WTC11 (cell line): ENCODE measurements at regions of chr12 and their contacts with region 1.

Region 1: DNA sequence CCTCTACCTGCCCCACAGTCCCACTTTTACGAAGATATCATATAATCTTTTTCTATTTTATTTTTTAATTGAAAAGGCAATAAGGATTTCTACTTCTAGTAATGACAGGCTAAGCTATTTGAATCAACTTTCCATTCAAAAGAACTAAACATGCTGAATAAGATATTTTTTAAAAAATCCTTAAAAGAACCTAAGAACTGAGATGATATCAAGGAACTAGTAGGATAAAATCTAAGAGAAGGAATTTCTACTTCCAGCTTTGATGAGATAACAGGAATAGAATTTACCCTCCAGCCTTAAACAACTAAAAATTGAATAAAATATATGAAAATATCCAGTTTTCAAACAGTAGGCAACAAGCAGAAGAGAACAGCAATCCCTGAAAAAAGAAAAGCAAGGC is 69.0 kb downstream of the TMEM116 start:
- DNase-seq: no peak
- ATAC-seq: no peak
- H3K4me3 Mint-ChIP-seq: no peak overlapping the region
- H3K27ac Mint-ChIP-seq: no peak overlapping the region
- H3K4me1 Mint-ChIP-seq: peaks cover 5% of the 10 kb centered on the region
- H3K27me3 Mint-ChIP-seq: no peaks in the 10 kb centered on the region
- CTCF ChIP-seq: no peak

Region 2: DNA sequence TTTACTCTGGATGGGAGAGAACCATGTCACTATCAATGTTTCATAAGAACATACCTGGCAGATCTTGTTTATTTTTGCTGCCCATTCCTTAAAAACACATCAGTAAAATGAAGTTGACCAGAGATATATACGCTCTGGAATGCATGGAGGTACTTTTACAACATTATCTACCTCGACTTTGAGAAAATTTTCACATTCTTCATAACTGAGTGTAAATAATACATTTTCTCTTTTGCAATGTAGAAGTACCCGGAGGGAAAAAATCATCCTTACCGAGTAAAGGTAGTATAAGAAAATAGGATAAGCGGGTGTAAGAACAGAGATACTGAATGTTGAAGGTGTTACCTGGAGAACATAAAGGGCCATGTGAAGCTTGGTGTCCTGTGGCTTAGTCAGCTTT is 11.7 kb before region 1 on chr12:
- CTCF ChIA-PET with region 1: no interaction called
- POLR2A ChIA-PET with region 1: no interaction called
- DNase-seq: no peak
- ATAC-seq: no peak
- H3K4me3 Mint-ChIP-seq: no peak overlapping the region
- H3K27ac Mint-ChIP-seq: no peak overlapping the region
- H3K4me1 Mint-ChIP-seq: peaks cover 11% of the 10 kb centered on the region
- H3K27me3 Mint-ChIP-seq: no peaks in the 10 kb centered on the region
- CTCF ChIP-seq: no peak

Region 3: DNA sequence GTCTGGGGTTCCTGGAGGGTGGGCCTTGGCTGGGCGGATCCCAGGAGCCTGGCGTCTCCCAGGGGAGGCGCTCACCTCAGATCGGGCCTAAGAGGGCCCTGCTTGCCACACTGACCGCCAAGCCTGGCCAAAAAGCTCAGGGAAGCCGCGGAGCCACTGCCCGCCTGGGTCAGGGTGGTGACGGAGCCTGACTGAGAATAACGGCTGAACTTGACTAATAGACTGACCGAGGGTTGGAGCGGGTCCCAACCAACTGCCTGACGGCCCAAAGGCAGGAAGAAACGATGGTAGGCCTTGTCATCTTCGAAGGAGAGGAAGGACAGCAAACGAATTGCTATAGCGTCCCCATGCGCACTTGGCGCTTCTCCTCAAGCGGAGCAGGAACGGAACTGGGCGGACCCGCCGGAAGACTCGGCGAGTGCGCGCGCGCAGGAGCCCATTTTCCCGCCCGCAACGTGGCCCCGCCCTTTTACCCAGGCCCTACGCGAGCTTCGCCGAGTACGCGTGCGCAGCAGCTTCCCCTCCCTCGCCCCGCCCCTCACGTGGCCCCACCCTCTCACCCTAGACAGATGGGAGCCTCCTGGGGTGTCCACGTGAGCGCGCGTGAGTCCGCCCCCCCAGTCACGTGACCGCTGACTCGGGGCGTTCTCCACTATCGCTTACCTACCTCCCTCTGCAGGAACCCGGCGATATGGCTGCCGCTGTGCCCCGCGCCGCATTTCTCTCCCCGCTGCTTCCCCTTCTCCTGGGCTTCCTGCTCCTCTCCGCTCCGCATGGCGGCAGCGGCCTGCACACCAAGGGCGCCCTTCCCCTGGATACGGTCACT is 69.1 kb after region 1 on chr12 and contains the starts of genes ERP29 and TMEM116:
- CTCF ChIA-PET with region 1: interaction called, 33 read pairs
- POLR2A ChIA-PET with region 1: no interaction called
- DNase-seq: peak; percentile 100
- ATAC-seq: peak; percentile 86
- H3K4me3 Mint-ChIP-seq: peak within 1 kb of the TSS; percentile 90
- H3K27ac Mint-ChIP-seq: peak within 1 kb of the TSS; percentile 100
- H3K4me1 Mint-ChIP-seq: peaks cover 22% of the 10 kb centered on the region
- H3K27me3 Mint-ChIP-seq: no peaks in the 10 kb centered on the region
- CTCF ChIP-seq: no peak
- total RNA-seq, gene ERP29: 162 to 171 TPM (median 168 TPM) in 3 replicates
- total RNA-seq, gene TMEM116: 7.8 to 10.5 TPM (median 9.4 TPM) in 3 replicates